CD4-positive, alpha-beta T cell (primary cell): ENCODE measurements at regions of chr5 and their contacts with region 1.

Region 1: GRCh38 chr5:72307968-72308852 is 11.8 kb downstream of the MRPS27 start:
- DNase-seq: peak; percentile 88 to 98 (median 92)
- ATAC-seq: peak; percentile 96
- H3K4me3 ChIP-seq: peak overlapping the region; percentile 68
- H3K4me3 Mint-ChIP-seq: peak overlapping the region; percentile 93
- H3K27ac ChIP-seq: peak overlapping the region; percentile 85 to 88
- H3K27ac Mint-ChIP-seq: peak overlapping the region; percentile 82
- H3K4me1 ChIP-seq: peaks cover 12% of the 10 kb centered on the region
- H3K4me1 Mint-ChIP-seq: peaks cover 28% of the 10 kb centered on the region
- H3K27me3 ChIP-seq: no peaks in the 10 kb centered on the region
- H3K27me3 Mint-ChIP-seq: no peaks in the 10 kb centered on the region
- CTCF ChIP-seq: peak; percentile 86

Region 2: DNA sequence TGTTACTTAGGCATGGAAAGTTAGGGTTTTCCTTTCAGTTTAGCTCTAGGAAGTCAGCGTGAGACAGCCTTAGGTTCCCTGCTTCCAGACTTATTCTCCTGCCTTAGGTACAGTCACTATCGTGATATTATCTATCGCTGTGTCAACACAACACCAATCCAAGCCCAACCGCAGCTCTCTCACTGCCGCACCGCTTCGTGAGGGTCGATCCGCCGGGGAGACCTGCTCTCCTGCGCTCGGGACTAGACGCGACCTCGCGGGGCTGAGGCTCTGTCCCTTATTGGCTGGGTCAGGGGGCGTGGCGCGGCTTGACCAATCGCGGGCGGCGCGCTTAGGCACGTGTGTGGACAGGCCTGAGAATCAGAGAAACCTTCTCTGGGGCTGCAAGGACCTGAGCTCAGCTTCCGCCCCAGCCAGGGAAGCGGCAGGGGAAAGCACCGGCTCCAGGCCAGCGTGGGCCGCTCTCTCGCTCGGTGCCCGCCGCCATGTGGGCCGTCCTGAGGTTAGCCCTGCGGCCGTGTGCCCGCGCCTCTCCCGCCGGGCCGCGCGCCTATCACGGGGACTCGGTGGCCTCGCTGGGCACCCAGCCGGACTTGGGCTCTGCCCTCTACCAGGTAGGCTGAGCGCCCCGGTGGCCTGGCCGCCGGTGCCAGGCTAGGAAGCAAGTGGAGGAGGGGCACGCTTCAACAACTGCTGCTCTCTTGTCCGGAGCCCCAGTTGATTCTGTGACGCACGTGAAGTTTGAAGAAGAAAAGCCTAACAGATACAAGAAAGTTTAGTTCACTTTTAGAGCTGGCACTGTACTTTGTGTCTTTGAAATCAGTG is 721.1 kb before region 1 on chr5 and contains the start of gene MCCC2:
- CTCF ChIA-PET with region 1: no interaction called
- POLR2A ChIA-PET with region 1: no interaction called
- intact Hi-C with region 1: loop called in 1 of 2 experiments (anchors 10 kb)
- DNase-seq: peak; percentile 91 to 98 (median 94)
- ATAC-seq: peak; percentile 98
- H3K4me3 ChIP-seq: peak within 1 kb of the TSS; percentile 89
- H3K4me3 Mint-ChIP-seq: peak within 1 kb of the TSS; percentile 98
- H3K27ac ChIP-seq: peak within 1 kb of the TSS; percentile 87 to 90
- H3K27ac Mint-ChIP-seq: peak within 1 kb of the TSS; percentile 89
- H3K4me1 ChIP-seq: peaks cover 33% of the 10 kb centered on the region
- H3K4me1 Mint-ChIP-seq: peaks cover 45% of the 10 kb centered on the region
- H3K27me3 ChIP-seq: no peaks in the 10 kb centered on the region
- H3K27me3 Mint-ChIP-seq: no peaks in the 10 kb centered on the region
- CTCF ChIP-seq: no peak
- total RNA-seq, gene MCCC2: 16.3 to 18.7 TPM

Region 3: GRCh38 chr5:71782771-71783770 is 525.1 kb before region 1 on chr5:
- CTCF ChIA-PET with region 1: no interaction called
- POLR2A ChIA-PET with region 1: no interaction called
- intact Hi-C with region 1: loop called in 1 of 2 experiments (anchors 5 kb)
- DNase-seq: peak in 11 of 14 experiments; percentile 4 to 42 (median 10)
- ATAC-seq: peak; percentile 69
- H3K4me3 ChIP-seq: peak overlapping the region; percentile 28
- H3K4me3 Mint-ChIP-seq: peak overlapping the region; percentile 69
- H3K27ac ChIP-seq: no peak overlapping the region
- H3K27ac Mint-ChIP-seq: no peak overlapping the region
- H3K4me1 ChIP-seq: peaks cover 11% of the 10 kb centered on the region
- H3K4me1 Mint-ChIP-seq: peaks cover 17% of the 10 kb centered on the region
- H3K27me3 ChIP-seq: no peaks in the 10 kb centered on the region
- H3K27me3 Mint-ChIP-seq: peaks cover 8% of the 10 kb centered on the region
- CTCF ChIP-seq: peak; percentile 18

Region 4: GRCh38 chr5:72138943-72139521 is 169.2 kb before region 1 on chr5:
- CTCF ChIA-PET with region 1: interaction called, 9 read pairs
- POLR2A ChIA-PET with region 1: no interaction called
- intact Hi-C with region 1: loop called (anchors 1 kb)
- DNase-seq: peak in 1 of 14 experiments; percentile 6
- ATAC-seq: no peak
- H3K4me3 ChIP-seq: no peak overlapping the region
- H3K4me3 Mint-ChIP-seq: no peak overlapping the region
- H3K27ac ChIP-seq: no peak overlapping the region
- H3K27ac Mint-ChIP-seq: no peak overlapping the region
- H3K4me1 ChIP-seq: no peaks in the 10 kb centered on the region
- H3K4me1 Mint-ChIP-seq: no peaks in the 10 kb centered on the region
- H3K27me3 ChIP-seq: peaks cover 0 to 26% of the 10 kb centered on the region in 2 experiments
- H3K27me3 Mint-ChIP-seq: peaks cover 41% of the 10 kb centered on the region
- CTCF ChIP-seq: no peak

Region 5: DNA sequence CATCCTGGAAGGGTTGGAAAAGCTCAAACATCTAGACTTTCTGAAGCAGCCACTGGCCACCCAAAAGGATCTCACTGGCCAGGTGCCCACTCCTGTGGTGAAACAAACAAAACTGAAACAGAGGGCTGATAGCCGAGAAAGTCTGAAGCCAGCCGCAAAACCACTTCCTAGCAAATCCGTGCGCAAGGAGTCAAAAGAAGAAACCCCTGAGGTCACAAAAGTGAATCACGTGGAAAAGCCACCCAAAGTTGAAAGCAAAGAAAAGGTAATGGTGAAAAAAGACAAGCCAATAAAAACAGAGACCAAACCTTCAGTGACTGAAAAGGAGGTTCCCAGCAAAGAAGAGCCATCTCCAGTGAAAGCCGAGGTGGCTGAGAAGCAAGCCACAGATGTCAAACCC is 113.4 kb before region 1 on chr5:
- CTCF ChIA-PET with region 1: no interaction called
- POLR2A ChIA-PET with region 1: no interaction called
- intact Hi-C with region 1: no loop called
- DNase-seq: peak in 3 of 14 experiments; percentile 36 to 63 (median 46)
- ATAC-seq: no peak
- H3K4me3 ChIP-seq: no peak overlapping the region
- H3K4me3 Mint-ChIP-seq: no peak overlapping the region
- H3K27ac ChIP-seq: no peak overlapping the region
- H3K27ac Mint-ChIP-seq: no peak overlapping the region
- H3K4me1 ChIP-seq: peaks cover 10% of the 10 kb centered on the region
- H3K4me1 Mint-ChIP-seq: no peaks in the 10 kb centered on the region
- H3K27me3 ChIP-seq: peaks cover 0 to 4% of the 10 kb centered on the region in 2 experiments
- H3K27me3 Mint-ChIP-seq: peaks cover 47% of the 10 kb centered on the region
- CTCF ChIP-seq: no peak

Region 6: DNA sequence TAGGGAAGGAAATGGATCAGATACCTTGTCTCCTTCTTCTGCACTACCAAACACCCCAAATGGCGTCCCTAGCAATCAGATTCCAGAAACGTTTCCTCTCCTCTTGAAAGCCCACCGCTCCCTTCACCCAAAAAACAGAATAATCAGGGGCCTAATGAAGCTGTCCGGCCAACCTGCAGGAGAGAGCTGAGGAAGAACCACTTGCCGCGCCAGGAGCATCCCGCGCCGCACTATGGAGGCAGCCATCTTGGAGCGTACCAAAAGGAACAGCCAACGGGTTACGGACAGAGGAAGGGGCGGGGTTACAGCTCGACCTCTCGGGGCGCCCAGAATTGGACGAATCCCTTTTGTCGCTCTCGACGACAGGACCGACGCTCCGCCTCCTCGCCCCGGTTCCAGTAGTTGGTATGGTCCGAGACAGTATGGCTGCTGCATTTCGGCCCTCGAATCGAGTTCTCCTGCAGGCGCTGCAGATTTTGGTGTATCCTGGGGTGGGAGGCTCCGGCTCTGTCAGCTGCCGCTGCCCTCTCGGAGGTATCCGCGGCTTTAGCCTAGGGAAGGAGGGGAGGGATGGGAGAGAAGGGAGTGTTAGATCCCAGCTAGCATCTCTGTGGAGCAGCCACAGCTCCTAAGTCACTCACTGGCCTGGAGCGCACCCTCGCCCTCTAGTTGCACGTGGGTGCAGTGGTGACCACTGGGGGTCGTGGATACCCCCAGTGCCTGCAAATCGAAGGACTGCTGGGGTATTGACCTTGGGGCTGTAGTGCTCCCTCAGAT is 12.0 kb after region 1 on chr5 and contains the starts of genes MRPS27 and PTCD2:
- CTCF ChIA-PET with region 1: interaction called, 75 read pairs
- POLR2A ChIA-PET with region 1: interaction called, 59 read pairs
- intact Hi-C with region 1: loop called (anchors 1 kb)
- DNase-seq: peak; percentile 88 to 99 (median 92)
- ATAC-seq: peak; percentile 99
- H3K4me3 ChIP-seq: peak within 1 kb of the TSS; percentile 94
- H3K4me3 Mint-ChIP-seq: peak within 1 kb of the TSS; percentile 98
- H3K27ac ChIP-seq: peak within 1 kb of the TSS; percentile 62 to 70
- H3K27ac Mint-ChIP-seq: peak within 1 kb of the TSS; percentile 92
- H3K4me1 ChIP-seq: peaks cover 19% of the 10 kb centered on the region
- H3K4me1 Mint-ChIP-seq: peaks cover 34% of the 10 kb centered on the region
- H3K27me3 ChIP-seq: no peaks in the 10 kb centered on the region
- H3K27me3 Mint-ChIP-seq: no peaks in the 10 kb centered on the region
- CTCF ChIP-seq: no peak
- total RNA-seq, gene MRPS27: 25.0 to 26.1 TPM
- total RNA-seq, gene PTCD2: 2.9 to 3.3 TPM

Region 7: GRCh38 chr5:72847989-72848473 is 539.8 kb after region 1 on chr5:
- CTCF ChIA-PET with region 1: no interaction called
- POLR2A ChIA-PET with region 1: no interaction called
- intact Hi-C with region 1: loop called in 1 of 2 experiments (anchors 10 kb)
- DNase-seq: peak; percentile 68 to 91 (median 77)
- ATAC-seq: peak; percentile 79
- H3K4me3 ChIP-seq: peak overlapping the region; percentile 91
- H3K4me3 Mint-ChIP-seq: peak overlapping the region; percentile 100
- H3K27ac ChIP-seq: peak overlapping the region; percentile 57 to 90
- H3K27ac Mint-ChIP-seq: peak overlapping the region; percentile 96
- H3K4me1 ChIP-seq: peaks cover 11% of the 10 kb centered on the region
- H3K4me1 Mint-ChIP-seq: peaks cover 85% of the 10 kb centered on the region
- H3K27me3 ChIP-seq: no peaks in the 10 kb centered on the region
- H3K27me3 Mint-ChIP-seq: no peaks in the 10 kb centered on the region
- CTCF ChIP-seq: no peak